Mucosa of descending colon (tissue), 3 donors: ENCODE measurements at regions of chr3 and their contacts with region 1.

Region 1: GRCh38 chr3:113211330-113212149 is at the start of gene BOC:
- DNase-seq: peak in 1 of 3 donors; percentile 29
- ATAC-seq: peak; percentile 62
- H3K4me3 ChIP-seq: peak within 1 kb of the TSS; percentile 19
- H3K4me1 ChIP-seq: peaks cover 4% of the 10 kb centered on the region
- CTCF ChIP-seq: no peak
- total RNA-seq, gene BOC: 4.9 to 70.9 (median 12.1) TPM

Region 2: GRCh38 chr3:113148286-113148685 is 63.3 kb before region 1 on chr3:
- intact Hi-C with region 1: loop called in 1 of 2 experiments (anchors 10 kb)
- DNase-seq: peak; percentile 34 to 55 (median 46)
- ATAC-seq: peak; percentile 86
- H3K4me3 ChIP-seq: no peak overlapping the region
- H3K4me1 ChIP-seq: no peaks in the 10 kb centered on the region
- CTCF ChIP-seq: no peak

Region 3: GRCh38 chr3:113275929-113276750 is 64.6 kb after region 1 on chr3:
- intact Hi-C with region 1: loop called in 1 of 2 experiments (anchors 10 kb)
- DNase-seq: no peak
- ATAC-seq: peak; percentile 24
- H3K4me3 ChIP-seq: no peak overlapping the region
- H3K4me1 ChIP-seq: no peaks in the 10 kb centered on the region
- CTCF ChIP-seq: no peak

Region 4: DNA sequence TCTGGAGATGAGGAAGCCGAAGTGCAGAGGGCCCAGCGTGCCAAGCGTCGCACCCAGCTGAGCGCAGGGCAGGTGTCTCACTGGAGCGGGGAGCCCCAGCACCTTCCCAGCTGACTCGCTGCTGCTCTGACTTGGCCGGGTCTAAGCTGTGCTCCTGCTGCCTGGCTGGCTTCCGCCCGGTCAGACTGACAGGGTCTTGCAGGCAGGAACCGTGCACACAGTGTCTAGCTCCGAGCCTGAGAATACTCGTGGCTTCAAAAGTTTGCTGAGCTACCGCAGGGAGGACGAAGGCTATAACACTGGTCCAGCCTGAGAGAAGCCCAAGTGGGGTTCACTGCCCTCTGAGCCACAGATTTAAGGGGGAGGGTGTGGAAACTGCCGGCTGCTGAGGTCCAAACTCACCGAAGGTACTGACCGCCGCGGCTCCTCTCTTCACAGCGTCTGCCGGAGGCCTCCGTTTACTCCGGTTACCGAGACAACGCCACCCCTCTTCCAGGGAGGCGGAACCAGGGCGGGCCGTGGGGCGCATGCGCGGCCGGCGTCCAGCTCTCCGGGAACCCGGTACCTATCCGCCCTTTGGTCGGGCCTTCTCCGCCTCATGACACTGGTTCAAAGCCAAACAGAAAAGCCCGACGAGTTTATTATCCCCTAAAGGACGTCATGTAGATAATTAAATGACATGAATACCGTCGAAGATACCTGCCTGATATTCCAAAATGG is 229.7 kb after region 1 on chr3 and contains the start of gene CFAP44:
- intact Hi-C with region 1: no loop called
- DNase-seq: peak; percentile 66 to 76 (median 69)
- ATAC-seq: peak; percentile 74
- H3K4me3 ChIP-seq: no peak within 1 kb of the TSS
- H3K4me1 ChIP-seq: no peaks in the 10 kb centered on the region
- CTCF ChIP-seq: no peak
- total RNA-seq, gene CFAP44: 10.8 to 17.5 (median 16.7) TPM